ENCODE measurements at regions of chr1 and their contacts with region 1.

Region 1: GRCh38 chr1:221648201-221648600 is 93.7 kb downstream of the DUSP10 start:
- DNase-seq: no peak
- ATAC-seq: no peak

Region 2: DNA sequence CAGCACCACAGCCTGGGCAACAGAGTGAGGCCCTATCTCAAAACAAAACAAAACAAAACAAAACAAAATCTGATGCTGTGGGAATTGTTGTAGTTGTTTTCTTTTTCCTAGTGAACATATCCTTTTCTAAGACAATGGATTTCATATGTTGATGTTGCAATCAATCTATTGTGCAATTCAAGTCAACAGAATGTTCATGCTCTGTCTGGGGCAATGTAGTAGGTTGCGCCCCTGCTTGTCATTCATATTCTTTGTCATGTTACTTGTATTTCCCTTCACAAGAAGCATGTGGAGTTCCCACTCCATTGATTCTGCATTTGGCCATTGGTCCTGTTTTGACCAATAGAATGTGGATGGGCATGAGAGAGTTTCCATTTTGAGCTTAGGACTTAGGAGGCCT is 130.2 kb before region 1 on chr1:
- intact Hi-C with region 1: no loop called
- DNase-seq: no peak
- ATAC-seq: no peak

Region 3: DNA sequence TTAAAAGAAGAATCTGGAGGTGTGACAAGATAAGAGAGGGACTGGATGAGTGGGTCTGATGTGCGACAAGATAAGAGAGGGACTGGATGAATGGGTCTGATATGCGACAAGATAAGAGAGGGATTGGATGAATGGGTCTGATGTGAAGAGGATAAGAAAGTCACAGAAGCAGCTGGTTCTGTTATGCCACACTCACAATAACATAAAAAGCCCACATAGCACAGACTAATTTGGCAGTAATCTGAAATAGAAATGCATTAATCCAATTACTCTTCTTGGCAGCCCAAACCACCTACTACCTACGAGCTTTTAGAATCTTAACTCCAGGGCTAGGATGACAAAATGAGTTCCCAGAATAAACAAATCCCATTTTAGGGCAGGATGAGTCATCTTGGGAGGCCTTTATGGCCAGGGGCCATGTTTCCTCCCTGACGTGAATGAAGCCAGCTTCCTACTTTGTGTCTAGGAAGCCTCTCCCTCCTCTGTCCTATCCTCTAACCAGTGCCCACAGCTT is 35.9 kb before region 1 on chr1:
- intact Hi-C with region 1: loop called (anchors 2 kb)
- DNase-seq: peak; percentile 65
- ATAC-seq: peak; percentile 86

Region 4: DNA sequence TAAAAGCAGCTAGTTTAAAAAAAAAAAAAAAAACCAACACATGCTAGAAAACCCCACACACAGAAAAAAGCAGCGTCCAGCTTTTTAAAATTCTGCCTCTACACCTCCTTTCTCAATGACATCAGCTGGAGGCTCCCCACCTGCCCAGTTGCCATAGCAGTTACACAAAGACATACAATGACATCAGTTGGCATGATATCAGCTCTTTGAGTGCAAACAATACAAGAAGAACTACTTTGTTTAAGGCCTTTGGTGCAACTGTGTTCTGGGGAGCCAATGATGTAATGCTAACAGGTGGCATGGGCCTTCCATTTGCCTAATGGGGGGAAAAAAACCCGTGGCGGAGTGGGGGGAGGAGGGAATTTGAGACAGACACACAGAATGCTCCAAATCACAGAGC is 60.8 kb after region 1 on chr1:
- intact Hi-C with region 1: no loop called
- DNase-seq: no peak
- ATAC-seq: peak; percentile 77